ENCODE measurements at regions of chr5 and their contacts with region 1.

Region 1: GRCh38 chr5:140710899-140711552 is 10.8 kb downstream of the ZMAT2 start:
- DNase-seq: peak; percentile 100
- H3K4me3 ChIP-seq: peak overlapping the region; percentile 84 to 95 (median 93)
- H3K27ac ChIP-seq: peak overlapping the region; percentile 90
- H3K4me1 ChIP-seq: peaks cover 10% of the 10 kb centered on the region
- H3K27me3 ChIP-seq: no peaks in the 10 kb centered on the region
- CTCF ChIP-seq: no peak
- POLR2A ChIP-seq: no peak

Region 2: GRCh38 chr5:140647042-140647341 is 64.0 kb before region 1 on chr5:
- CTCF ChIA-PET with region 1: no interaction called
- POLR2A ChIA-PET with region 1: no interaction called
- dilution Hi-C with region 1: no loop called
- intact Hi-C with region 1: loop called (anchors 2 kb)
- DNase-seq: peak; percentile 10
- H3K4me3 ChIP-seq: peak overlapping the region; percentile 65 to 90 (median 76)
- H3K27ac ChIP-seq: peak overlapping the region; percentile 21
- H3K4me1 ChIP-seq: peaks cover 13% of the 10 kb centered on the region
- H3K27me3 ChIP-seq: no peaks in the 10 kb centered on the region
- CTCF ChIP-seq: no peak
- POLR2A ChIP-seq: no peak

Region 3: DNA sequence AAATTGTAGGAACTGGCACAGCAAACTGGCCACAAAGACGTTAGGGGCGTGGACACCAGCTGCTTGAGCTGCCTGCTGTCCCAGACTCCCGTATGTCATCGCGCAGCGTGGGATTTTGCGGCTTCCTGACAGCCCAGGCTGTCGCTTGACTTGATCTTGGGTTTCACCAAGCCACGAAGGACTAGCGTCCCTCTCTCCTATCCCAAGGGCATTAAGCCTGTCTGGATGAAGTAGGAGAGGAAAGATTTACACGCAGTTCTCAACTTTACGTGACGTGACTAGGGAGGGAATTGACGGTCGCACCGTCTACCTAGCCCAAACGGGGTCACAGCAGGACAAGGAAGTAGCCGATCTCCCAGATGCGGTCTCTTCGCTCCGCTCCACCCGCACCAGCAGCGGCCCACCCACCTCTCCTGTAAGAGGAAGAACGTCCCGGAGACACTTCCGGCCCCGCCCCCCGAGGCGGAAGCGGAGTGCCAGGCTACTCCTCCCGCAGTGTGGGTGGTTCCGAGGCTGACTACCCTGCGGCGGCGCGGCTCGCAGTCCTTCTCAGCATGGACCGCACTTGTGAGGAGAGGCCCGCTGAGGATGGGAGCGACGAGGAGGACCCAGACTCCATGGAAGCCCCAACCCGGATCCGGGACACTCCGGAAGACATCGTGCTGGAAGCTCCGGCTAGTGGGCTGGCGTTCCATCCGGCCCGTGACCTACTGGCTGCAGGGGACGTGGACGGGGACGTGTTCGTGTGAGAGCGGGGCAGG is 46.5 kb before region 1 on chr5 and contains the start of gene WDR55:
- CTCF ChIA-PET with region 1: interaction called, 4 read pairs
- POLR2A ChIA-PET with region 1: no interaction called
- dilution Hi-C with region 1: no loop called
- intact Hi-C with region 1: loop called (anchors 2 kb)
- DNase-seq: peak; percentile 88
- H3K4me3 ChIP-seq: peak within 1 kb of the TSS; percentile 73 to 93 (median 81)
- H3K27ac ChIP-seq: peak within 1 kb of the TSS; percentile 73
- H3K4me1 ChIP-seq: peaks cover 3% of the 10 kb centered on the region
- H3K27me3 ChIP-seq: no peaks in the 10 kb centered on the region
- CTCF ChIP-seq: no peak
- POLR2A ChIP-seq: peak; percentile 94
- total RNA-seq, gene WDR55: 24.0 and 25.3 TPM in 2 replicates

Region 4: DNA sequence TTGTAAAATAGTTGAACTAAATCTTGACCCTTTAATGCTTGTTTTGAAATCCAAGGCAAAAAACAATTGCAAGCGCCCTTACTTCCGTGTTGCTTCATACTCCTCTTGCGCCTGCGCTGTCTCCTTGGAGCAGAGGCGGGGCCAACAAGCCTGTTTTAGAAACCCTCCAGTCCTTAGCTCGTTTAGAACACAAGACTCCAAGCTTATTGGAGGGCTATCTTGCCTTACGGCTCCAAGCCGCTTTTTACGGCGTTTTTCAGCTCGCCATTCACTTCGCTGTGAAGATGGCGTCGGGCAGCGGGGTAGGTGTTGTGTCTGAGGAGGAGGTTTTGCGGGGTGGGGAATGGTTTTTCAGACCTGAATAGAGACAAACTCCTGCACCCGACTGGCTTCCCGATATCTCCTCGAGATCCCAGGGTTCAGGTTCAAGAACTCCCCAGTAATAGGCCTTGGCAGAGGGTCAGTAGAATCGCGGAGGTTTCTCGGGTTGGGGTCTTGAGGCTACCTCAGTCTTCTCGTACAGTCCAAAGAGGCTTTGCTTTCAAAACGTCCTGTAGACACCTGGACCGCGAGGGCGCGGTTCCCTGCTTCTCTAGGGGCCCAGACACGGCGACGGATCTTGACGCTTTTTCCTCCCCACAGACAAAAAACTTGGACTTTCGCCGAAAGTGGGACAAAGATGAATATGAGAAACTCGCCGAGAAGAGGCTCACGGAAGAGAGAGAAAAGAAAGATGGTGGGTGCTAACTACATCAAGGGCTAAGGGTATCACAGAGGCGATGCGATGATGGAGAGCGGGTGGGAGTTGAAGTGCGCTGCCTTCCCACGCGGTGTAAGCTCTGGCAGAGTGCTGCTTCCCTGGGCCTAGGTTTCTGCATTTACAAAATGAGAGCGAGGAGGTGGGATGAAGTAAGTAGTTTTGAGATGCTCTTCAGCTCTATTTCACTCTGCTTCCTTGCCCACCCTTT is 10.6 kb before region 1 on chr5 and contains the start of gene ZMAT2:
- CTCF ChIA-PET with region 1: interaction called, 10 read pairs
- POLR2A ChIA-PET with region 1: interaction called, 8 read pairs
- dilution Hi-C with region 1: no loop called
- intact Hi-C with region 1: loop called (anchors 1 kb)
- DNase-seq: peak; percentile 99
- H3K4me3 ChIP-seq: peak within 1 kb of the TSS; percentile 62 to 90 (median 74)
- H3K27ac ChIP-seq: peak within 1 kb of the TSS; percentile 49
- H3K4me1 ChIP-seq: peaks cover 12% of the 10 kb centered on the region
- H3K27me3 ChIP-seq: no peaks in the 10 kb centered on the region
- CTCF ChIP-seq: no peak
- POLR2A ChIP-seq: peak; percentile 69
- total RNA-seq, gene ZMAT2: 49.0 and 49.4 TPM in 2 replicates

Region 5: DNA sequence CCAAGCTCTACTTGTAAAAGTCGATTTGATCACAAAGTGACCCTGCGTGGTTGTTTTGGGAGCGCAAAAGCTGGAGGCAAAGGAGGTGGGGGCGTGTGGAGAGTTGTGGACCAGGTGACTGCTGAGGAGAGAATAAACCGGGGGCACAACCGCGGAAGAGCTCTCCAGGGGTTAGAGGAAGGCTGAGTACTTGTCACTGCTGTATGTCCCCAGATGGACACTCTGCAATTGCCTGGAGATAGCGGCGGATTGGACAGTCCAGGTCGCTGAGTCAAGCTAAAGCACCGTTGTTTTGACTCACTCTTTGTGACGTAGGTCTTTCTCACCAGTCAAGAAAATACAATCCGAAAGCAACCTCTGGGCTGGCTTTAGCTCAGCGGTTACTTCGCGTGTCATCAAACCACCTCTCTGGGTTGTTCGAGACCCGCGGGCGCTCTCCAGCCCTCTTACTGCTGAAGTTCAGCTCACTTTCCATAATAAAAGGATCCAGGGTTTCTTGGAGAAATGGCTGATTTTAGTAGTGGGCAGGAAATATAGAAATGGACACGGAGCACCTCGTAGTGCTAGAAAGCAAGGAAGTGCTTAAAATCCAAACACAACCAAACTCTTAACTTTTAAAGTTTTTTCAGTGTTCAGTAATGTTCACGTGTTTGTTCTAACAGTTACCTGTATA is 14.9 kb after region 1 on chr5:
- CTCF ChIA-PET with region 1: interaction called, 12 read pairs
- POLR2A ChIA-PET with region 1: no interaction called
- dilution Hi-C with region 1: no loop called
- intact Hi-C with region 1: no loop called
- DNase-seq: peak; percentile 85
- H3K4me3 ChIP-seq: peak overlapping the region; percentile 28 to 66 (median 54)
- H3K27ac ChIP-seq: no peak overlapping the region
- H3K4me1 ChIP-seq: peaks cover 4% of the 10 kb centered on the region
- H3K27me3 ChIP-seq: no peaks in the 10 kb centered on the region
- CTCF ChIP-seq: no peak
- POLR2A ChIP-seq: no peak

Measured in endothelial cell of umbilical vein (primary cell).